Right ventricle myocardium inferior (tissue), 1 donor: ENCODE measurements at regions of chr3 and their contacts with region 1.

Region 1: GRCh38 chr3:170869645-170870593 is at the start of gene RPL22L1:
- DNase-seq: peak; percentile 98
- ATAC-seq: peak; percentile 98
- total RNA-seq, gene RPL22L1: 11.7 TPM

Region 2: DNA sequence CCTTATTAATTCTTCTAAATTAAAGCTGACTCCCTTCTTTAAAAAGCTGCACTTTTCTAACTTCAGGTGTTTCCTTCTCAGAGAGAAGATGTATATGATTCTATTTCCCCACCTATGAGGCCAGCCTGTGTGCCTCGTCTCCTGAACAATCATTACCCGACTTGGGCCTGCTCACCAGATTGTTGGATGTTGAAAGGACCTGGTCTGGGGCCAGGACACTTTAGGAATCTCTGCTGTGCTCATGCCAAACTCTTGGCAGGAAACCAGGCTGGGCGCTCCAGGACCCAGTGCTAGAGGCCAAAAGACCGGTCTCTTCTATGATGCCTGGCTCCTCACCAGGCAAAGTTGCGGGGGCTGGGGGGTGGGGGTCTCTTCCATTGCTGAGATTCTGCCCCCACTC is 983.2 kb before region 1 on chr3:
- intact Hi-C with region 1: no loop called
- DNase-seq: peak; percentile 75
- ATAC-seq: peak; percentile 96

Region 3: GRCh38 chr3:170679190-170679589 is 190.7 kb before region 1 on chr3:
- intact Hi-C with region 1: no loop called
- DNase-seq: no peak
- ATAC-seq: no peak

Region 4: GRCh38 chr3:170908235-170909116 is 38.6 kb after region 1 on chr3 and contains the start of gene EIF5A2:
- intact Hi-C with region 1: loop called (anchors 1 kb)
- DNase-seq: peak; percentile 98
- ATAC-seq: peak; percentile 99
- total RNA-seq, gene EIF5A2: 8.8 TPM